Activated B cell treated with CpG ODN at 0.5 μM for 24 hours (primary cell): ENCODE measurements at regions of chr5 and their contacts with region 1.

Region 1: DNA sequence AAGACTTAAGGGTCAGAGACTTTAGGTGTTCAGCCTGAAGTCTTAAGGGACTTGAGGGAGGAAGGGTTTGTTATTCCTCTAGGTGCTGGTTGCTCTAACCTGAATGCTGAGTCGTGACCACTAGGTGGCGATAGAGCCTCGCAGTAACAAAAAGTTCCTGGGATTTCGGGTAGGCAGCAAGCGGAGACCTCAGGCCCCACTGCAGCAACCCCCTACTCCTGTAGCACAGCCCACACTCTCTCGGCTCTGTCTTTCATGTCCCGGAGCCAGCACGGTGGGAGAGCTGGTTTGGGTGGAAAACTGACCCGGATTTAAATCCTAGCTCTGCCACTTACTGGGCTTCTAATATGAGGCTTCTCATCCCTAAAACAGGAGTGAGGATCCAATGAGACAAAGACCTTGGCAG is 100.3 kb upstream of the PANK3 start:
- DNase-seq: peak; percentile 26
- ATAC-seq: peak; percentile 34
- H3K4me3 Mint-ChIP-seq: no peak overlapping the region
- H3K27ac Mint-ChIP-seq: no peak overlapping the region
- H3K4me1 Mint-ChIP-seq: peaks cover 4% of the 10 kb centered on the region
- H3K27me3 Mint-ChIP-seq: no peaks in the 10 kb centered on the region
- CTCF ChIP-seq: peak; percentile 37

Region 2: DNA sequence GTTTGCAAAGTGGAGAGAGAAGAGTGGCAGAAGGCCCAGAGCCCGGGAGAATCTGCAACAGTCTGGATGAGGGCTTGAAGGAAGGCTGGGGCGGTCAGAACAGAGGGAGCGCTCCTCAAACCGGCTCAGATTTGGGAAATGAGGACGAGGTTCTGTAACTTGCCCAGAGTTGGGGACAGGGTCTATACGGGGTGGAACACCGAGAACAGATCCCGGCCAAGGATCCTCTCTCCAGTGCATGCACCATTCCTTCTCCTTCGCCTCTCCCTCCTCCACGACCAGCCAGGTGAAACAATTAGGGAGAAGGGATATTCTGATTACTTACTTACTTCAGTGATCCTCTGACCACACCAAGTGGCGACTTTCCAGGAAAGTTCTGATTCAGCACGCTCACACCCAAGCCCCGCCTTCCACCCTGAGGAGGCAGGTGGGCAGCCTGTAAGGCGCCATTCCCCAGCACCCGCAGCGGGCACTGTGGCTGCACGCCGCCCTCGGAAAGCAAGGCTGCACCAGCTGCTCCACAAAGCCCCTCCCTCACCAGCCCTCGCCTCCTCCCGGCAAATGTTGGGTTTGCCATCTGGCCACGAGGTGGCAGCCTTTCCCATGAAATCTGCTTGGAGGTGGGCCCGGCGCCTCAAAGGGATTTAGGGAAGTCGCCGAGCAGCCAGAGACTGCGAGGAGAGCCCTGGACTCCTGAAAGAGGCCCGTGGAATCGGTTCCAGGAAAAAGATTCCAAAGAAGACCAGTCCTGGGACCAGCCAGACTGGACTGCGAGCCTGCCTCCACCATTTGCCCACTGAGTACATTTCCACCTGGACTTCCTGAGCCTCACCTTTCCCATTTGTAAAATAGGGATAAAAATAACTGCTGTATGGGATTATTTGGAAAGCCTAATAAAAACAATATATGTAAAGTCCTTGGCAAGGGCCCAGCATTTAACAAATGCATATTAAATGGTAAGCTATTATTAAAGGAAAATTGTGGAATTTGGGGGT is 410.3 kb before region 1 on chr5:
- CTCF ChIA-PET with region 1: no interaction called
- POLR2A ChIA-PET with region 1: no interaction called
- intact Hi-C with region 1: loop called (anchors 1 kb)
- DNase-seq: peak; percentile 55
- ATAC-seq: peak; percentile 70
- H3K4me3 Mint-ChIP-seq: peak overlapping the region; percentile 45
- H3K27ac Mint-ChIP-seq: no peak overlapping the region
- H3K4me1 Mint-ChIP-seq: peaks cover 9% of the 10 kb centered on the region
- H3K27me3 Mint-ChIP-seq: peaks cover 25% of the 10 kb centered on the region
- CTCF ChIP-seq: peak; percentile 59